B cell (primary cell): ENCODE measurements at regions of chr1 and their contacts with region 1.

Region 1: DNA sequence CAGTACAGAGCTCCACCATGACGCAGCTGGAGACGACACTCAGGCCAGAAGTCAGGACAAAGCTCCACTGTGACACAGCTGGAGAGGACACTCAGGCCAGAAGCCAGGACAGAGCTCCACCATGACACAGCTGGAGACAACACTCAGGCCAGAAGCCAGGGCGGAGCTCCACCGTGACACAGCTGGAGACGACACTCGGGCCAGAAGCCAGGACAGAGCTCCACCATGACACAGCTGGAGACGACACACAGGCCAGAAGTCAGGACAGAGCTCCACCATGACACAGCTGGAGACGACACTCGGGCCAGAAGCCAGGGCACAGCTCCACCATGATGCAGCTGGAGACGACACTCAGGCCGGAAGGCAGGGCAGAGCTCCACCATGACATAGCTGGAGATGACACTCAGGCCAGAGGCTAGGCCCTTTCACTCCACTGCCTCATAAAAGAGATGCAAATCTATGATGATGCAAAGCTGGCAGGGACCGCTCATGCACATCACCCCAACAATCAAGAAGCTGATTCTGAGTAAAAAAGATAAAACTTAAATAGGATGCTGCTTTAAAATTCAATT is 13.6 kb upstream of the OR2B11 start:
- DNase-seq: no peak
- ATAC-seq: peak; percentile 84
- H3K4me3 ChIP-seq: no peak overlapping the region
- H3K4me3 Mint-ChIP-seq: peak overlapping the region; percentile 34
- H3K27ac ChIP-seq: no peak overlapping the region
- H3K27ac Mint-ChIP-seq: no peak overlapping the region
- H3K4me1 ChIP-seq: peaks cover 8 to 11% of the 10 kb centered on the region in 2 donors
- H3K4me1 Mint-ChIP-seq: peaks cover 31% of the 10 kb centered on the region
- H3K27me3 ChIP-seq: no peaks in the 10 kb centered on the region
- H3K27me3 Mint-ChIP-seq: no peaks in the 10 kb centered on the region
- CTCF ChIP-seq: no peak

Region 2: GRCh38 chr1:246566128-246566812 is 905.3 kb before region 1 on chr1 and contains the starts of genes CNST and TFB2M:
- CTCF ChIA-PET with region 1: no interaction called
- POLR2A ChIA-PET with region 1: no interaction called
- intact Hi-C with region 1: loop called (anchors 5 kb)
- DNase-seq: peak; percentile 98
- ATAC-seq: peak; percentile 90
- H3K4me3 ChIP-seq: peak within 1 kb of the TSS; percentile 70 to 100 (median 95)
- H3K4me3 Mint-ChIP-seq: peak within 1 kb of the TSS; percentile 98
- H3K27ac ChIP-seq: peak within 1 kb of the TSS; percentile 83 to 95
- H3K27ac Mint-ChIP-seq: peak within 1 kb of the TSS; percentile 94
- H3K4me1 ChIP-seq: peaks cover 50 to 53% of the 10 kb centered on the region in 2 donors
- H3K4me1 Mint-ChIP-seq: peaks cover 45% of the 10 kb centered on the region
- H3K27me3 ChIP-seq: no peaks in the 10 kb centered on the region
- H3K27me3 Mint-ChIP-seq: no peaks in the 10 kb centered on the region
- CTCF ChIP-seq: no peak
- total RNA-seq, gene CNST: 54.0 and 54.6 TPM in 2 replicates
- total RNA-seq, gene TFB2M: 11.6 and 14.7 TPM in 2 replicates

Region 3: GRCh38 chr1:247373721-247374141 is 97.8 kb before region 1 on chr1:
- CTCF ChIA-PET with region 1: interaction called, 17 read pairs
- POLR2A ChIA-PET with region 1: no interaction called
- intact Hi-C with region 1: no loop called
- DNase-seq: peak; percentile 66
- ATAC-seq: peak; percentile 71
- H3K4me3 ChIP-seq: peak overlapping the region in 2 of 5 experiments; percentile 32 to 49
- H3K4me3 Mint-ChIP-seq: peak overlapping the region; percentile 41
- H3K27ac ChIP-seq: no peak overlapping the region
- H3K27ac Mint-ChIP-seq: no peak overlapping the region
- H3K4me1 ChIP-seq: peaks cover 0 to 2% of the 10 kb centered on the region in 2 donors
- H3K4me1 Mint-ChIP-seq: peaks cover 7% of the 10 kb centered on the region
- H3K27me3 ChIP-seq: peaks cover 0 to 9% (median 0%) of the 10 kb centered on the region in 4 experiments
- H3K27me3 Mint-ChIP-seq: peaks cover 20% of the 10 kb centered on the region
- CTCF ChIP-seq: peak; percentile 50

Region 4: GRCh38 chr1:247440001-247440620 is 31.4 kb before region 1 on chr1:
- CTCF ChIA-PET with region 1: interaction called, 3 read pairs
- POLR2A ChIA-PET with region 1: interaction called, 3 read pairs
- intact Hi-C with region 1: loop called (anchors 1 kb)
- DNase-seq: peak; percentile 84
- ATAC-seq: peak; percentile 97
- H3K4me3 ChIP-seq: peak overlapping the region in 1 of 5 experiments; percentile 18
- H3K4me3 Mint-ChIP-seq: peak overlapping the region; percentile 44
- H3K27ac ChIP-seq: peak overlapping the region; percentile 52
- H3K27ac Mint-ChIP-seq: peak overlapping the region; percentile 47
- H3K4me1 ChIP-seq: peaks cover 39 to 46% of the 10 kb centered on the region in 2 donors
- H3K4me1 Mint-ChIP-seq: peaks cover 55% of the 10 kb centered on the region
- H3K27me3 ChIP-seq: no peaks in the 10 kb centered on the region
- H3K27me3 Mint-ChIP-seq: no peaks in the 10 kb centered on the region
- CTCF ChIP-seq: no peak